Caco-2 (cell line): ENCODE measurements at regions of chr11 and their contacts with region 1.

Region 1: DNA sequence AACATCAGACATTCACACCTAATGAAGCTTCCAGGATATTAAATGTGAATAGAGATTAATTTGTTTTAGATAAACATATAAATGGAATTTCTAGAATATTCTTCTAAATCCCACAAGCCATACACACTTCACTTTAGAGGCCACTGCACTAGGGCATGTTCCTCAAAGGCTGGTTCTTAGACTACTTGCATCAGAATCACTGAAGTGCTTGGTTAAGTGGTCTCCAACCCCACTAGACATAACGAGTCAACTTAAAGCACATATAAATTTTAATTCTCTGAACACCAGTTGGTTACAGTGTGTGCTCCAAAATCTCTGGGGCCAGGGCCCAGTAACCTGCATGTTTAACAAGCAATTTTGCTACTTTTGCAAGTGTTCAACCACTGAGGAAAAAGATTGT is 7.9 kb upstream of the ALKBH8 start:
- DNase-seq: no peak
- H3K4me3 ChIP-seq: no peak overlapping the region
- H3K4me3 Mint-ChIP-seq: no peak overlapping the region
- H3K27ac Mint-ChIP-seq: no peak overlapping the region
- H3K4me1 ChIP-seq: no peaks in the 10 kb centered on the region
- H3K4me1 Mint-ChIP-seq: no peaks in the 10 kb centered on the region
- H3K27me3 ChIP-seq: peaks cover 1% of the 10 kb centered on the region; the same call in 1 of the 2 replicates
- H3K27me3 Mint-ChIP-seq: peaks cover 9% of the 10 kb centered on the region
- CTCF ChIP-seq: no peak

Region 2: GRCh38 chr11:107549253-107549953 is 24.0 kb before region 1 on chr11:
- CTCF ChIA-PET with region 1: no interaction called
- POLR2A ChIA-PET with region 1: no interaction called
- intact Hi-C with region 1: loop called (anchors 1 kb)
- DNase-seq: peak in 1 of 2 experiments; percentile 50
- H3K4me3 ChIP-seq: no peak overlapping the region
- H3K4me3 Mint-ChIP-seq: no peak overlapping the region
- H3K27ac Mint-ChIP-seq: no peak overlapping the region
- H3K4me1 ChIP-seq: 0 out of 2 replicates have a peak, but pooled peaks cover 8% of the 10 kb centered on the region
- H3K4me1 Mint-ChIP-seq: peaks cover 7% of the 10 kb centered on the region
- H3K27me3 ChIP-seq: no peaks in the 10 kb centered on the region
- H3K27me3 Mint-ChIP-seq: no peaks in the 10 kb centered on the region
- CTCF ChIP-seq: peak; percentile 88 to 94

Region 3: GRCh38 chr11:107606141-107606540 is 32.7 kb after region 1 on chr11:
- CTCF ChIA-PET with region 1: no interaction called
- POLR2A ChIA-PET with region 1: no interaction called
- intact Hi-C with region 1: loop called (anchors 1 kb)
- DNase-seq: no peak
- H3K4me3 ChIP-seq: no peak overlapping the region
- H3K4me3 Mint-ChIP-seq: no peak overlapping the region
- H3K27ac Mint-ChIP-seq: no peak overlapping the region
- H3K4me1 ChIP-seq: no peaks in the 10 kb centered on the region
- H3K4me1 Mint-ChIP-seq: no peaks in the 10 kb centered on the region
- H3K27me3 ChIP-seq: no peaks in the 10 kb centered on the region
- H3K27me3 Mint-ChIP-seq: peaks cover 21% of the 10 kb centered on the region
- CTCF ChIP-seq: peak in 1 of 2 experiments; percentile 21